Gastrocnemius medialis (tissue), 4 donors: ENCODE measurements at regions of chr11 and their contacts with region 1.

Region 1: DNA sequence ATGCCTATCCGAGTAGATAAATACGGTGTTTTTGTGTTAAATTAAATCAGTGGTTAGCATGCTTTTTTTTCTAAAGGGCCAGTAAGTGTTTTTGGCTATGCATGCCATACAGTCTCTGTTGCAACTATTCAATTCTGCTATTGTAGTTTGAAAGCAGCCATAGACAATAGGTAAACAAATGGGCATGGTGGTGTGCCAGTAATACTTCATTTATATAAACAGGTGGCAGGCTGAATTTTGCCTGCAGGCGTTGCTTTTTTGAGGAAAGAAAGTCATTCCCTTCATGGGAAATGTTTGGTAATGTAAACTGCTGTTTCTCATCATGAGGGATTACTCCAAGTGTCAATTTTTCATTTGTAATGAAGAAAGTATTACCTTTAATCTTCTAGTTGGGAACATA is 106.5 kb downstream of the TMEM135 start:
- DNase-seq: no peak
- ATAC-seq: no peak
- H3K4me3 ChIP-seq: no peak overlapping the region
- H3K27ac ChIP-seq: no peak overlapping the region
- H3K4me1 ChIP-seq: peaks cover 0 to 9% of the 10 kb centered on the region in 2 donors
- H3K27me3 ChIP-seq: no peaks in the 10 kb centered on the region
- CTCF ChIP-seq: no peak
- POLR2A ChIP-seq: no peak

Region 2: DNA sequence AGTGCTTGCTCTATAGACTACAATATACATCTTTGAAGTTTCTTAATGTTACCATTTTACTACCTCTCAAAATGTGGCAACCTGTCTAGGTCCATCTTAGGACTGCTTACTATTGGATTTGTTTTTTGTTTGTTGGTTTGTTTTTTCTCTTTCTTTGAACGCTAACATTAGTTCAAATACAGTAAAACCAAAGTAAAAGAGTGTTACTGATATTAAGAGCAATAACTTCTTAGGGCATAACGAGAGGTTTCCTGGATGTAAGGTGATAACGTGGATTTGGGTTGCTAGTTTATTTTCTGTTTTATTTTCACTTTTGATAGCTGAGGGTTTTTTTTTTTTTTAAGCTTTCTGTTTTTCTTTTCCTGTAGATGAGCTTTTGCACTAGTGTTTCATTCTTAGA is 62.9 kb before region 1 on chr11:
- in situ Hi-C with region 1: loop called in 1 of 4 experiments (anchors 10 kb)
- intact Hi-C with region 1: no loop called
- DNase-seq: no peak
- ATAC-seq: no peak
- H3K4me3 ChIP-seq: peak overlapping the region in 2 of 4 donors; percentile 1 to 13
- H3K27ac ChIP-seq: no peak overlapping the region
- H3K4me1 ChIP-seq: peaks cover 22 to 25% of the 10 kb centered on the region in 2 donors
- H3K27me3 ChIP-seq: no peaks in the 10 kb centered on the region
- CTCF ChIP-seq: no peak
- POLR2A ChIP-seq: no peak

Region 3: DNA sequence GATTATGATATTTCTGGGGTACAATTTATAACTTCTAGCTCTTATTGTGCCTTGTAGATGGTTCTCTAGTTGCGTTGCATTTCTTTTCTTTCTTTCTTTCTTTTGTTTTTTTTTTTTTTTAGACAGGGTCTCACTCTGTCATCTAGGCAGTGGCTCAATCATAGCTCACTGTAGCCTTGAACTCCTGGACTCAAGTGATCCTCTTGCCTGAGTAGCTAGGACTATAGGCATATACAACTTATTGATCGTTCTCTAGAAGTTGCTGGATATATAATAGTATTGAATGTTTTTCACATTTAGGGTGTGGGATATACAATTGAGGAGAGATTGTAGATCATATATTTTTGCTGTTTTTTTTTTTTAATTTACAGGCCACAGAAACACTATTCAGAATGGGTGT is 12.7 kb after region 1 on chr11:
- in situ Hi-C with region 1: no loop called
- intact Hi-C with region 1: loop called (anchors 1 kb)
- DNase-seq: no peak
- ATAC-seq: no peak
- H3K4me3 ChIP-seq: no peak overlapping the region
- H3K27ac ChIP-seq: no peak overlapping the region
- H3K4me1 ChIP-seq: peaks cover 0 to 10% of the 10 kb centered on the region in 2 donors
- H3K27me3 ChIP-seq: no peaks in the 10 kb centered on the region
- CTCF ChIP-seq: no peak
- POLR2A ChIP-seq: no peak

Region 4: DNA sequence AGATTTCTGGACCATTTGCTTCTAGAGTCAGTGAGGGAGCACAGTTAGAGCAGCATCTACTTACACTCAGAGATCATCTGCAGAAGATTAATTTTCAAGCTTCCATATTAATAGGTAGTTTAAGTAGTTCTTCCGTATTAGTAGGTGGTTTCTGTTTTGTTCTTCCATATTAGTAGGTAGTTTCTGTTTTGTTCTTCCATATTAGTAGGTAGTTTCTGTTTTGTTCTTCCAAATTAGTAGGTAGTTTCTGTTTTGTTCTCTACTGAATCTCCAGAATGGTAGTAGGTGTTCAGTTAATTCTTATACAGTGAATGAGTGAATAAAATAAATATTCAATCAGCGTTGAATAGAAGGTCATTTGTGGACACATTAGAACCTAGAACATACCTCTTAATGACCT is 69.2 kb after region 1 on chr11:
- in situ Hi-C with region 1: no loop called
- intact Hi-C with region 1: no loop called
- DNase-seq: no peak
- ATAC-seq: no peak
- H3K4me3 ChIP-seq: no peak overlapping the region
- H3K27ac ChIP-seq: no peak overlapping the region
- H3K4me1 ChIP-seq: no peaks in the 10 kb centered on the region
- H3K27me3 ChIP-seq: no peaks in the 10 kb centered on the region
- CTCF ChIP-seq: no peak
- POLR2A ChIP-seq: no peak